GM23248 (cell line): ENCODE measurements at regions of chr17 and their contacts with region 1.

Region 1: GRCh38 chr17:41665566-41666236 is 23.0 kb upstream of the EIF1 start:
- DNase-seq: peak; percentile 93
- H3K4me3 ChIP-seq: peak overlapping the region; percentile 74
- H3K27ac ChIP-seq: peak overlapping the region; percentile 56
- H3K4me1 ChIP-seq: peaks cover 5% of the 10 kb centered on the region
- H3K27me3 ChIP-seq: no peaks in the 10 kb centered on the region

Region 2: GRCh38 chr17:40615295-40615988 is 1050.3 kb before region 1 on chr17:
- in situ Hi-C with region 1: loop called (anchors 25 kb)
- DNase-seq: peak; percentile 58
- H3K4me3 ChIP-seq: no peak overlapping the region
- H3K27ac ChIP-seq: no peak overlapping the region
- H3K4me1 ChIP-seq: no peaks in the 10 kb centered on the region
- H3K27me3 ChIP-seq: peaks cover 32% of the 10 kb centered on the region

Region 3: DNA sequence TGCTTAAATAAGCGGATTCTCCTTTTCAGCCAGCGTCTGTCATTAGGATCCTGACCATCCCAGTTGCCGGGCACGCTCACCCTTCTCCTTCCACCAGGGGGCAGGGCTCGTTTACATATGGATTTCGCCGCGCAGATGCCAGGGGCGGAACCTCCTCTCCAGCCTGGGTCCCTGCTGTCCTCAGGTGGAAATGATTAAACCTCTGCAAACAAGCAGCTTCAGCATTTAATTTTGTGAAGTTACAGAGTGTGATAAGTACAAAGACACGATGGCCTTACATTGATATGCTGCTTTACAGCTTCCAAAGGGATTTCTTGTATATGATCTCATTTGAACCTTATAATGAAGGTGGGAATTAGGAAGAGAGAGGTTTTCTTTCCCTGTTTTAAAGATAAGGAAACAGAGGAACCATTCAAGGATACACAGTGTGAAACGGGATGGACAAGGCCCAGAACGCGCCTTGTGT is 862.1 kb before region 1 on chr17:
- in situ Hi-C with region 1: loop called (anchors 10 kb)
- DNase-seq: peak; percentile 90
- H3K4me3 ChIP-seq: no peak overlapping the region
- H3K27ac ChIP-seq: no peak overlapping the region
- H3K4me1 ChIP-seq: no peaks in the 10 kb centered on the region
- H3K27me3 ChIP-seq: peaks cover 15% of the 10 kb centered on the region; the same call in 1 of the 2 replicates

Region 4: GRCh38 chr17:41329281-41329948 is 336.3 kb before region 1 on chr17:
- in situ Hi-C with region 1: loop called (anchors 25 kb)
- DNase-seq: peak; percentile 81
- H3K4me3 ChIP-seq: no peak overlapping the region
- H3K27ac ChIP-seq: no peak overlapping the region
- H3K4me1 ChIP-seq: no peaks in the 10 kb centered on the region
- H3K27me3 ChIP-seq: no peaks in the 10 kb centered on the region